ENCODE measurements at regions of chr13 and their contacts with region 1.

Region 1: GRCh38 chr13:25375727-25376358 is 4.1 kb downstream of the ATP8A2 start:
- DNase-seq: peak; percentile 71
- H3K4me3 Mint-ChIP-seq: no peak overlapping the region
- H3K27ac Mint-ChIP-seq: no peak overlapping the region
- H3K4me1 Mint-ChIP-seq: no peaks in the 10 kb centered on the region
- H3K27me3 Mint-ChIP-seq: peaks cover 23% of the 10 kb centered on the region
- CTCF ChIP-seq: peak; percentile 80

Region 2: DNA sequence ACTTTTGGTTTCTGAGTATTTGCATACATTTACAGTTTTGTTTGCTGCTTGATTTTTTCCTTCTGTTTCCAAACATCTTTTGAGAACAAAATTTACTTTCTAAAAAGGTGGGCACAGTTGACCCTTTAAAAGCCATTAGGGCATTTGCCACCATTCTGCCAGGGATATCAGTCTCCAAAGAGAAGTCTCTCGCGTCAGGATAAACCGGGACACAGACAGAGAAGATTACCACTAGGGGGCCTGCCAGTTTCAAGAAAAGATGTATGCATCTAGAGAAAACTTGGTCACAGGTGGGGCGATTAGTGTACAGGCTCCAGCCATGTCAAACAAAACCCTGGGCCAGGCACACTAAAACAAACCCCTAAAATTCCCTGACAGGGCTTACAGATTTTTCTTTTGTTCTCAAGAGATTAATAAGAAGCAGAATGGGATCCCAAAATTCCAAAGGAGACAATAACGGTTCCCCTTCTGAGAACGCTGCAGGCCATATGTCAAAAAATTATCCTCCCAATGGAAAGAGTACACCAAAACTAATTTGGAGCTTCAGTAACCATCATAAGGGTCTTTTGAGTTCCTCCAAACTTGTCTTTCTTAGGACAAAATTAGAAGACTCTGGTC is 290.6 kb before region 1 on chr13:
- CTCF ChIA-PET with region 1: interaction called, 13 read pairs
- POLR2A ChIA-PET with region 1: no interaction called
- intact Hi-C with region 1: loop called (anchors 5 kb)
- DNase-seq: peak; percentile 66
- H3K4me3 Mint-ChIP-seq: no peak overlapping the region
- H3K27ac Mint-ChIP-seq: no peak overlapping the region
- H3K4me1 Mint-ChIP-seq: no peaks in the 10 kb centered on the region
- H3K27me3 Mint-ChIP-seq: no peaks in the 10 kb centered on the region
- CTCF ChIP-seq: peak; percentile 52

Region 3: GRCh38 chr13:25232937-25233515 is 142.8 kb before region 1 on chr13:
- CTCF ChIA-PET with region 1: interaction called, 25 read pairs
- POLR2A ChIA-PET with region 1: no interaction called
- intact Hi-C with region 1: loop called (anchors 5 kb)
- DNase-seq: peak; percentile 45
- H3K4me3 Mint-ChIP-seq: no peak overlapping the region
- H3K27ac Mint-ChIP-seq: no peak overlapping the region
- H3K4me1 Mint-ChIP-seq: no peaks in the 10 kb centered on the region
- H3K27me3 Mint-ChIP-seq: peaks cover 16% of the 10 kb centered on the region
- CTCF ChIP-seq: peak; percentile 32

Region 4: DNA sequence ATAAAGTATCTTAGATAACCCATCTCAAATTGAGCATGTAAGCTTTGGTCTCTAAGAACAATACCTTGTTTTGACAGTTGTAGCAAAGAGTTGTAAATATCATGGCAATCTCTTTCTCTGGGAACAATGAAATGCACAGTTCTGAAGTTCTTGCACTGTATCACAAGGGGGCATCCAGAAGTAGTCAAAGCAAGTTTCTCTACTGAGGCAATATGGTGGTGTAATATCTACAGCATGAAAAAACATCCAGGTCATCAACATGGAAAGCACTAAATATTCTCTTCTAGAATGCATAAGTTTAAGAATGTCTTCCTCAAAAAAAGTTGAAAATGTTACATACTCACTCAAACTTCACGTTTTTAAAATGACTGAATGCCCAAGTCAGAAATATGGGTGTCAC is 108.1 kb before region 1 on chr13:
- CTCF ChIA-PET with region 1: interaction called, 3 read pairs
- POLR2A ChIA-PET with region 1: interaction called, 3 read pairs
- intact Hi-C with region 1: loop called (anchors 1 kb)
- DNase-seq: peak; percentile 12
- H3K4me3 Mint-ChIP-seq: no peak overlapping the region
- H3K27ac Mint-ChIP-seq: no peak overlapping the region
- H3K4me1 Mint-ChIP-seq: peaks cover 6% of the 10 kb centered on the region
- H3K27me3 Mint-ChIP-seq: no peaks in the 10 kb centered on the region
- CTCF ChIP-seq: peak; percentile 16

Region 5: DNA sequence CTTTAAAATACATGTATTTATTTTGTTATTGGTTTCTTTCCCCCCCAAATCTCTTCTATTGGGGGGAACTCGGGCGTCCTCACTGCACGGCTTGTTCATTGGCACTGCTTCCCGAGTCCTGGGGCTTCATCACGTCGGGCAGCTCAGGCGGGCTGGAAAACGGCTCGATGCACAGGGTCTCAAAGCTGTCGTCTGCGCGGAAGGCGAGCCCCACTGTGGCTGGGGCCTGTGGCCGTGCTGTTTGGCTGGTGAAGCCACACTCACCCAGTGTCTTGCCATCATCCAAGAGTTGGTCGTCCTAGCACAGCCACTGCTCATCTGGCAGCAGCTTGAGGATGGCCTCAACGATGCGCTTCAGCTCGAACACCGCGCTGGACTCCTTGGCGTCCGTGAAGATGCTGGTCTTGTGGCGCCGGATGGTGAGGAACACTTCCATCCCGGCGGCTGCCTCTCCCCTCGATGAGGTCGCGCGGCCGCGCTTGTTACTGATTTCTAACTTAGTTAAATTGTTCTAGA is 10.1 kb before region 1 on chr13:
- CTCF ChIA-PET with region 1: interaction called, 21 read pairs
- POLR2A ChIA-PET with region 1: no interaction called
- intact Hi-C with region 1: no loop called
- DNase-seq: no peak
- H3K4me3 Mint-ChIP-seq: no peak overlapping the region
- H3K27ac Mint-ChIP-seq: no peak overlapping the region
- H3K4me1 Mint-ChIP-seq: no peaks in the 10 kb centered on the region
- H3K27me3 Mint-ChIP-seq: peaks cover 24% of the 10 kb centered on the region
- CTCF ChIP-seq: no peak

Region 6: GRCh38 chr13:25394402-25395060 is 18.7 kb after region 1 on chr13:
- CTCF ChIA-PET with region 1: interaction called, 10 read pairs
- POLR2A ChIA-PET with region 1: interaction called, 5 read pairs
- intact Hi-C with region 1: no loop called
- DNase-seq: no peak
- H3K4me3 Mint-ChIP-seq: no peak overlapping the region
- H3K27ac Mint-ChIP-seq: no peak overlapping the region
- H3K4me1 Mint-ChIP-seq: no peaks in the 10 kb centered on the region
- H3K27me3 Mint-ChIP-seq: no peaks in the 10 kb centered on the region
- CTCF ChIP-seq: no peak

Region 7: GRCh38 chr13:26051657-26052311 is 675.9 kb after region 1 on chr13 and contains the start of gene SHISA2:
- CTCF ChIA-PET with region 1: no interaction called
- POLR2A ChIA-PET with region 1: no interaction called
- intact Hi-C with region 1: no loop called
- DNase-seq: peak; percentile 53
- H3K4me3 Mint-ChIP-seq: peak within 1 kb of the TSS; percentile 62
- H3K27ac Mint-ChIP-seq: no peak within 1 kb of the TSS
- H3K4me1 Mint-ChIP-seq: no peaks in the 10 kb centered on the region
- H3K27me3 Mint-ChIP-seq: no peaks in the 10 kb centered on the region
- CTCF ChIP-seq: no peak
- total RNA-seq, gene SHISA2: 0.86 and 1.2 TPM in 2 replicates

Measured in MCF 10A (cell line).